HCT116 (cell line): ENCODE measurements at regions of chr11 and their contacts with region 1.

Region 1: DNA sequence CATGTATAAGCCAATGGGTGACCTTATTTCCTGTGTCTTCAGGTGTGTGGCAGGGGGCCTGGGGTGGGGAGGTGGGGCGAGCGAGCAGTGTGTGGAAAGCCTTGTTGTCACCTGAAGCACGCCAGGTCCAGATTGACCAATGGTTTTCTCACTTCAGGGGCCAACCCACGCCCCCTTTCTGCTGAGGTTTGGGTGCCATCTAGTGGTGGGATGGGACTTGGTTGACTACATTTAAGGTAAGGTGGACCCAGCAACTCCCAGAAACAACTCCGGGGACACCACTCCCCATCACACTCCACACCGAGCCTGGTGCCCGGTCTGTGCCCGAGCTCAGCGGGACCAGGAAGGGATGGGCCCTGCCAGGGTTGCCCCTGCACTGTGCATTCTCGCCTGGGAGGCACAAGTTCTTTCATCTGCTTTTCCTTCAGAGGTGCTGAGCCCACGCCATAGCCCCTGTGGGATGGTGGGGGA is 40.0 kb downstream of the TPCN2 start:
- DNase-seq: peak; percentile 75
- ATAC-seq: peak; percentile 91
- H3K4me3 ChIP-seq: no peak overlapping the region
- H3K27ac ChIP-seq: 0 out of 2 replicates have a peak overlapping the region, but pooled peaks have one; percentile 13
- H3K4me1 ChIP-seq: peaks cover 9 to 16% of the 10 kb centered on the region in 2 experiments
- H3K27me3 ChIP-seq: no peaks in the 10 kb centered on the region
- CTCF ChIP-seq: peak; percentile 78 to 83 (median 79)
- POLR2A ChIP-seq: no peak
- RAD21 ChIP-seq: peak; percentile 94

Region 2: DNA sequence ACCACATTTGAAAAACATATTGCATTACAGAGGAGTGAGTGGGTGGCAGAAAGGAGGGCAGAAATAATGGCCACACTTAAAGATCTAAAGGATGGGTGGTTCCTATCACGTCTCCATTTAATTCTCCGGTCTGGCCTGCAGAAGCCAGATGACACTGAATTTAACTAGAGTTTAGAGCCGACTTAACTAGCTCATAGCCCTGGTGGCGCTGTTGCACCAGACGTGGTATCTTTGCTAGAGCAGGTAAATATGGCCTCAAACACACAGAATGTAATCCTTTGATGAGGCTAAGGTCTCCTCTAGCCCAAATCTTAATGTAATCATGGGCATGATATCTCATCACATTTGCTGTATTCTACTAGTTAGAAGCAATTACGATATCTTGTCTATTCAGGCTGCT is 455.9 kb before region 1 on chr11:
- CTCF ChIA-PET with region 1: no interaction called
- POLR2A ChIA-PET with region 1: no interaction called
- RAD21 ChIA-PET with region 1: no interaction called
- intact Hi-C with region 1: loop called (anchors 2 kb)
- DNase-seq: peak; percentile 79
- ATAC-seq: peak; percentile 100
- H3K4me3 ChIP-seq: no peak overlapping the region
- H3K27ac ChIP-seq: no peak overlapping the region
- H3K4me1 ChIP-seq: no peaks in the 10 kb centered on the region
- H3K27me3 ChIP-seq: no peaks in the 10 kb centered on the region
- CTCF ChIP-seq: peak; percentile 74 to 92 (median 89)
- POLR2A ChIP-seq: no peak
- RAD21 ChIP-seq: peak; percentile 97

Region 3: DNA sequence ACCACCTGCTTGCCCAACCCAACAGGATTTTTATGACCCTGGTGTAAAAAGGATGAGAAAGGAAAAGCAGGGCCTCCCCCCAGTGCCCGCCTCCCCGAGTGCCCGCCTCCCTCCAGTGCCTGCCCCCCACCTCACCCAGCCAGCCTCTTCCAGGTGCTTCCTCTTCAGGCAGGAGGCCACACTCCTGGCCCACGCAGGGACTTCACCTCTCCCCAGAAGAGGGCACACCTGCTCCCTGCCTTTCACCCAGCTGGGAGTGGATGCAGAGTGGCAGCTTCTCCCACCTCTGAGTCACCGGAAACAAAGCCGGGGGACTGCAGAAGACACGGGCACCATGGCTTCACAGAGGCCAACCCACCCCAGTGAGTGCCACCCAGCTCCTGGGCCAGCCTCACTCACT is 263.1 kb before region 1 on chr11:
- CTCF ChIA-PET with region 1: no interaction called
- POLR2A ChIA-PET with region 1: no interaction called
- RAD21 ChIA-PET with region 1: no interaction called
- intact Hi-C with region 1: loop called (anchors 5 kb)
- DNase-seq: peak; percentile 37
- ATAC-seq: peak; percentile 96
- H3K4me3 ChIP-seq: no peak overlapping the region
- H3K27ac ChIP-seq: peak overlapping the region; percentile 44; the same call in 1 of the 2 replicates
- H3K4me1 ChIP-seq: peaks cover 9 to 12% of the 10 kb centered on the region in 2 experiments; a peak in 3 of 4 replicates
- H3K27me3 ChIP-seq: no peaks in the 10 kb centered on the region
- CTCF ChIP-seq: peak; percentile 21 to 54 (median 25); a peak in 5 of 6 replicates
- POLR2A ChIP-seq: no peak
- RAD21 ChIP-seq: peak; percentile 73

Region 4: GRCh38 chr11:68903288-68904247 is 185.1 kb before region 1 on chr11 and contains the starts of genes IGHMBP2 and MRPL21:
- CTCF ChIA-PET with region 1: no interaction called
- POLR2A ChIA-PET with region 1: no interaction called
- RAD21 ChIA-PET with region 1: no interaction called
- intact Hi-C with region 1: loop called (anchors 5 kb)
- DNase-seq: peak; percentile 70
- ATAC-seq: peak; percentile 90
- H3K4me3 ChIP-seq: peak within 1 kb of the TSS; percentile 79 to 91
- H3K27ac ChIP-seq: peak within 1 kb of the TSS; percentile 66
- H3K4me1 ChIP-seq: peaks cover 13 to 25% of the 10 kb centered on the region in 2 experiments; a peak in 3 of 4 replicates
- H3K27me3 ChIP-seq: no peaks in the 10 kb centered on the region
- CTCF ChIP-seq: no peak
- POLR2A ChIP-seq: peak; percentile 79
- RAD21 ChIP-seq: peak; percentile 10; the same call in 1 of the 2 replicates
- total RNA-seq, gene IGHMBP2: 19.3 TPM
- total RNA-seq, gene MRPL21: 90.2 TPM

Region 5: GRCh38 chr11:68956142-68956541 is 132.6 kb before region 1 on chr11:
- CTCF ChIA-PET with region 1: no interaction called
- POLR2A ChIA-PET with region 1: no interaction called
- RAD21 ChIA-PET with region 1: interaction called in 1 of 2 experiments, 4 read pairs
- intact Hi-C with region 1: loop called (anchors 2 kb)
- DNase-seq: no peak
- ATAC-seq: peak; percentile 88
- H3K4me3 ChIP-seq: no peak overlapping the region
- H3K27ac ChIP-seq: no peak overlapping the region
- H3K4me1 ChIP-seq: no peaks in the 10 kb centered on the region; a peak in 1 of 4 replicates
- H3K27me3 ChIP-seq: no peaks in the 10 kb centered on the region
- CTCF ChIP-seq: peak in 2 of 3 experiments; percentile 60 to 62; a peak in 4 of 6 replicates
- POLR2A ChIP-seq: no peak
- RAD21 ChIP-seq: peak; percentile 42